ENCODE measurements at regions of chr4 and their contacts with region 1.

Region 1: DNA sequence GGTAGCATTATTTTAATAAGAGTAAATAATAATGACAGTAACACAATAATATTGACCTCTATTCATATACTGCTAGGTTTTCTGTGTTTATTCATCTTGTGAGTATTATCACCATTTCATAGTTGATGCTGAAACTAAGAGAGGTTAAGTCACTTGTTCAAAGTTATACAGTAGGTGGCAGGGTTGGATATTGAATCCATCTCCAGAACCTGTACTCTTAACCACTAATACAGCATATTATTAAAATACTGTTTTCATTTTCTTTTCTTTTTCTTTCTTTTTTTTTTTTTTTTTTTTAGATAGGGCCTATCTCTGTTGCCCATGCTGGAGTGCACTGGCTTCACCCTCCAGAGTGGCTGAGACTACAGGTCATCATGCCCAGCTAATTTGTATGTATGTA is 7.1 kb upstream of the ELF2 start:
- DNase-seq: no peak
- H3K4me3 ChIP-seq: no peak overlapping the region
- H3K27ac ChIP-seq: no peak overlapping the region
- H3K27me3 ChIP-seq: no peaks in the 10 kb centered on the region
- CTCF ChIP-seq: peak; percentile 38

Region 2: DNA sequence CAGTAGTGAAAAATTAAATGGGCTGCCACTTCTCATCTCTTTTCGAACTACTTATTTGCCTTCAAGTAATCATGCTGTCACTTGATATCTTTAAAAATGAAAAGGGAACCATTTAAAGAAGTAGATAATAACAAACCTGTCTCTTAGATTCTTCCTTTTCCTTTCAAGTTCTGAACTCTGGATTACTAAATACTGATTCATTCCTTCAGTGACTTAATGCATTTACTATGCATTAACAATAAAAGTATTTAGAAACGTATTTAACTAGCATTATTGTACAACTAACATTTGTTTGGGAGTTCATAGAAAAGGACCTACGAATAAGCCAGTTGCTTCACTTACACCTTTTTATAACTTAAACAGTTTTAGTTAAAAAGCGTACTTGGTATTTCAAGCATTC is 208.7 kb after region 1 on chr4:
- CTCF ChIA-PET with region 1: interaction called, 12 read pairs
- POLR2A ChIA-PET with region 1: no interaction called
- DNase-seq: no peak
- H3K4me3 ChIP-seq: no peak overlapping the region
- H3K27ac ChIP-seq: no peak overlapping the region
- H3K27me3 ChIP-seq: no peaks in the 10 kb centered on the region
- CTCF ChIP-seq: no peak